ENCODE measurements at regions of chr16 and their contacts with region 1.

Region 1: GRCh38 chr16:58411742-58412614 is 19.7 kb downstream of the GINS3 start:
- DNase-seq: no peak
- ATAC-seq: no peak
- H3K4me3 ChIP-seq: no peak overlapping the region
- H3K4me3 Mint-ChIP-seq: no peak overlapping the region
- H3K27ac ChIP-seq: no peak overlapping the region
- H3K27ac Mint-ChIP-seq: no peak overlapping the region
- H3K4me1 ChIP-seq: no peaks in the 10 kb centered on the region
- H3K4me1 Mint-ChIP-seq: no peaks in the 10 kb centered on the region
- H3K27me3 ChIP-seq: no peaks in the 10 kb centered on the region
- H3K27me3 Mint-ChIP-seq: no peaks in the 10 kb centered on the region
- CTCF ChIP-seq: no peak

Region 2: GRCh38 chr16:58366247-58367031 is 45.5 kb before region 1 on chr16:
- CTCF ChIA-PET with region 1: no interaction called
- POLR2A ChIA-PET with region 1: no interaction called
- intact Hi-C with region 1: loop called in 1 of 2 experiments (anchors 5 kb)
- DNase-seq: no peak
- ATAC-seq: no peak
- H3K4me3 ChIP-seq: no peak overlapping the region
- H3K4me3 Mint-ChIP-seq: no peak overlapping the region
- H3K27ac ChIP-seq: no peak overlapping the region
- H3K27ac Mint-ChIP-seq: no peak overlapping the region
- H3K4me1 ChIP-seq: no peaks in the 10 kb centered on the region
- H3K4me1 Mint-ChIP-seq: no peaks in the 10 kb centered on the region
- H3K27me3 ChIP-seq: peaks cover 15 to 17% of the 10 kb centered on the region in 2 experiments
- H3K27me3 Mint-ChIP-seq: peaks cover 43% of the 10 kb centered on the region
- CTCF ChIP-seq: no peak

Region 3: GRCh38 chr16:58533751-58534470 is 121.9 kb after region 1 on chr16:
- CTCF ChIA-PET with region 1: no interaction called
- POLR2A ChIA-PET with region 1: no interaction called
- intact Hi-C with region 1: no loop called
- DNase-seq: no peak
- ATAC-seq: no peak
- H3K4me3 ChIP-seq: no peak overlapping the region
- H3K4me3 Mint-ChIP-seq: no peak overlapping the region
- H3K27ac ChIP-seq: no peak overlapping the region
- H3K27ac Mint-ChIP-seq: no peak overlapping the region
- H3K4me1 ChIP-seq: no peaks in the 10 kb centered on the region
- H3K4me1 Mint-ChIP-seq: no peaks in the 10 kb centered on the region
- H3K27me3 ChIP-seq: no peaks in the 10 kb centered on the region
- H3K27me3 Mint-ChIP-seq: no peaks in the 10 kb centered on the region
- CTCF ChIP-seq: no peak